ENCODE measurements at regions of chr12 and their contacts with region 1.

Region 1: DNA sequence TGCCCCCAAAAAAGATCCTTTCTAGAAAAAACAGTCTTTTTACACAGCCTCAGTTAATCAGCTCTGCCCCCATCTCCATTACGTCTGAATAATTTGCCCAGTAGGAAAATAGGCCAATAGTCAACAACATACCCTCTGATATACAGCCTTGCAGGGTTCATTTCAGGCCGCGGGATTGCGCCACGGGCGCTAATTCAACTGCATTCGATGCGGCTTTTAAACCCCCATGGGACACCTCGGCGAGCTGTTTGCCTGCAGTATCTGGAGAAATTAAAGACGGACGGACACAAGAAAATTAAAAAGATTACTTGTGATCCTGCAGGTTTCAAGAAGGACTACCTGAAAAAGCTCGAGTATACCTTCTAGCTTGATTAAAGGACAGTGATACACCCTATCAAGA is 36.1 kb downstream of the ERP29 start:
- DNase-seq: no peak
- H3K4me3 ChIP-seq: no peak overlapping the region
- H3K27ac ChIP-seq: no peak overlapping the region
- H3K4me1 ChIP-seq: peaks cover 17% of the 10 kb centered on the region
- H3K27me3 ChIP-seq: no peaks in the 10 kb centered on the region
- CTCF ChIP-seq: no peak
- POLR2A ChIP-seq: no peak

Region 2: DNA sequence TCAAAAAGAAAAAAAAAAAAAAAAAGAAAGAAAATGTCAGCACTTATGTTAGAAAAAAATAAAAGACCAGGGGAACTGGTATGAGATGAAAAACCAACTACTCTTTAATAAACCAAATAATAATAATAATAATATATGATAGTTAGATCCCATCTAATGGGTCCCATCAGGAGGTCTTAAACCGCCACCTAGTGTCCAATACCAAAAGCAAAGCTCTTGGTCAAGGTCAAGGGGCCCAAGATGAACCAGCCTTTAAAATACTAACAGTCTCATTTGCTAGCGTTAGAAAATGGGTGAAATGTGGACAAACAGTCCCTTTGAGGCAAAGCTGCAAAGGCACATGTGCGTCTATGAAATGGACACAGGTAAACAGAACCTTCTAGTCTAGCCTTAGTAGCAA is 375.8 kb before region 1 on chr12:
- CTCF ChIA-PET with region 1: no interaction called
- POLR2A ChIA-PET with region 1: no interaction called
- dilution Hi-C with region 1: no loop called
- intact Hi-C with region 1: no loop called
- DNase-seq: peak; percentile 31
- H3K4me3 ChIP-seq: no peak overlapping the region
- H3K27ac ChIP-seq: no peak overlapping the region
- H3K4me1 ChIP-seq: no peaks in the 10 kb centered on the region
- H3K27me3 ChIP-seq: no peaks in the 10 kb centered on the region
- CTCF ChIP-seq: peak; percentile 19 to 37
- POLR2A ChIP-seq: no peak

Region 3: DNA sequence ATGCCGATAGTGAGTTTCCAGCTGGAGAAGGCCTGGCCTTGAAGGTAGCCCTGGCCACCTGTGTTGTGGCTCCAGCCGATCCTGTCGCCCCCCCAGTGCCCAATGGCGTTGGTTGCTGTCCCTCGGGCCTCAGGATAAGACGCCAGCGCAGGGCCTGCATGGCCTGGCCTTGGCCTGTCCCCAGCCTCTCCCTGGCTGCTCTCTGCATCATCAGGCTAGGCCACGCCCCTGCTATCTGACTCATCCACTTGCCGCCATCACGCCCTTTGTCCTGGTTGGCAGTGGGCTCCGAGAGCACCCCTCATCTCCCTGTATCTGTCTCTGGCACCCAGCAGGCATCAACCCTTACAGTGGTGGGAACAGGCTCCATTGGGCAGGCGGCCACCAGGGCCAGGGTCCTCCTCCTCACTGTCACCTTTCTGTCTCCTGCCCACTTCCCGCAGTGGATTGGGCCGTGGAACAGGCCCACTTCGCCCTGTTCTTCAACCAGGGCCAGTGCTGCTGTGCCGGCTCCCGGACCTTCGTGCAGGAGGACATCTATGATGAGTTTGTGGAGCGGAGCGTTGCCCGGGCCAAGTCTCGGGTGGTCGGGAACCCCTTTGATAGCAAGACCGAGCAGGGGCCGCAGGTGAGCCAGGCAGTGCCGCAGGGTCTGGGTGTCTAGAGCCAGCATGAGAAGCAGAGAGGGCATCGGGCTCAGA is 257.0 kb before region 1 on chr12:
- CTCF ChIA-PET with region 1: no interaction called
- POLR2A ChIA-PET with region 1: no interaction called
- dilution Hi-C with region 1: no loop called
- intact Hi-C with region 1: no loop called
- DNase-seq: no peak
- H3K4me3 ChIP-seq: no peak overlapping the region
- H3K27ac ChIP-seq: no peak overlapping the region
- H3K4me1 ChIP-seq: no peaks in the 10 kb centered on the region
- H3K27me3 ChIP-seq: no peaks in the 10 kb centered on the region
- CTCF ChIP-seq: no peak
- POLR2A ChIP-seq: no peak

Region 4: DNA sequence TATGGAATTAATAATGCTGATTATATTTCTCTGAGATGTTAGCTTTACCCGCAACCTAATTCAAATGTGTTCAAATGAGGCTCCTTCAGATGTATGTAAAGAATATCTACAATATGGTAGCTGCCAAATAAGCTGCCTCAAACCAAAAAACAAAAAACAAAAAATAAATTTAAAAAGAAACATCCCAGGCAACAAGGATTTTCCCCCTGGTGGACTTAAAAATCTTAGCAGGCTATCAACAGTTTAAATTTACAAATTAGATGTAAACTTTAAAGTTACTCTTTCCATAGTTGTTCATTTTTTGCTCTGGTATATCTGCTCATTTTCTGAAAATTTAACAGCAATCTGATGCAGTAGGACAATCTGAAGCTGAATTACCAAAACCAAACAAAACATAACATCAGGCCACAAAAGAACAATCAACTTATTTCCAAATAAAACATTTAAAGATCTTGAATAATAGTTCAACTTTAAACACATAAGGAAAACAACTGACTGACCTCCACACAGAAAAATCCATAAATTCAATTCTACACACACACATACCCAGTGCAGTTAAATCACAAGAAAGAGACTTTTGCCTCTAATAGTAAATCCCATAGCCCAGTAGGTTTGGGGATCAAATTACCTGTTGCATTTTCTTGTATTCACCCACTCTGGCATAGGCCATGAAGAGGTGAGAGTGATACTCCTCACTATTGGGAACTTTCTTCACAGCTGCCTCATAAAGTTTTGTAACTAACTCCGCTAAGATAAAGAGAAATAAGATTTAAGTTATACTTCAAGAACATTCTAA is 37.9 kb after region 1 on chr12:
- CTCF ChIA-PET with region 1: interaction called, 3 read pairs
- POLR2A ChIA-PET with region 1: interaction called, 10 read pairs
- dilution Hi-C with region 1: no loop called
- intact Hi-C with region 1: no loop called
- DNase-seq: no peak
- H3K4me3 ChIP-seq: no peak overlapping the region
- H3K27ac ChIP-seq: no peak overlapping the region
- H3K4me1 ChIP-seq: peaks cover 7% of the 10 kb centered on the region
- H3K27me3 ChIP-seq: no peaks in the 10 kb centered on the region
- CTCF ChIP-seq: no peak
- POLR2A ChIP-seq: no peak